ENCODE measurements at regions of chr13 and their contacts with region 1.

Region 1: GRCh38 chr13:84917252-84917878 is 881.9 kb downstream of the SLITRK6 start:
- DNase-seq: peak in 1 of 2 donors; percentile 40
- H3K4me3 ChIP-seq: no peak overlapping the region
- H3K27ac ChIP-seq: no peak overlapping the region
- H3K4me1 ChIP-seq: no peaks in the 10 kb centered on the region
- H3K27me3 ChIP-seq: no peaks in the 10 kb centered on the region
- CTCF ChIP-seq: peak in 4 of 7 experiments; percentile 9 to 46 (median 36)
- EP300 ChIP-seq: no peak
- POLR2A ChIP-seq: no peak

Region 2: DNA sequence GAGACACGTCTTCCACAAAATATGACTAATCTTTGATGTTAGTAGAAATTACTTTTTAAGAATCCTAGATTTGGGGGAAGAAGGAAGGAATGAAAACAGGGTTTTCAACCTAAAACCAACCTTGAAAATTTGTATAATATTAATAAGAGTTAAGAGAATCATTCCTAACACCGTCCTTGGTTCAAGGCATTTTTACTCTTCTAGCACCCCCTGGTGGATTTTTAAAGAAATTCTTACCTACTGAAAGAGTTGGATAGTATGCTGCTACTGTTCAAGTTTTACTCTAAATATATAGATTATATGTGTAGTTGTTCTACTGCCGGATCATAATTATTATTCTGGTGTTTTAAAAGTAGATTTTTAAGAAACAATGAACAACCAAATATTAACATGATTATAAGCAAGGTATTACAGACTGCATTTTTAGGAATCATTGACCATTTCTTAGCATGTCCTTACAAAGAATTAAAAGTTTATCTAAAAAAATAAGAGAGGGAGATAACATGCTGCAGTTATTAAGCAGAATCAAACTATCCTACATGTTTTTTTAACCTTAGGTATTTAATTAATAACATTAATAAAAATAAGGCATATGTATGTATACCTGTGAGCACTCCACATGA is 889.3 kb after region 1 on chr13:
- intact Hi-C with region 1: loop called (anchors 5 kb)
- DNase-seq: peak in 1 of 2 donors; percentile 82
- H3K4me3 ChIP-seq: no peak overlapping the region
- H3K27ac ChIP-seq: no peak overlapping the region
- H3K4me1 ChIP-seq: no peaks in the 10 kb centered on the region
- H3K27me3 ChIP-seq: no peaks in the 10 kb centered on the region
- CTCF ChIP-seq: peak in 5 of 7 experiments; percentile 24 to 62 (median 46)
- EP300 ChIP-seq: no peak
- POLR2A ChIP-seq: no peak

Measured in stomach (tissue), 19 donors.